Ovary (tissue), 10 donors: ENCODE measurements at regions of chrX and their contacts with region 1.

Region 1: DNA sequence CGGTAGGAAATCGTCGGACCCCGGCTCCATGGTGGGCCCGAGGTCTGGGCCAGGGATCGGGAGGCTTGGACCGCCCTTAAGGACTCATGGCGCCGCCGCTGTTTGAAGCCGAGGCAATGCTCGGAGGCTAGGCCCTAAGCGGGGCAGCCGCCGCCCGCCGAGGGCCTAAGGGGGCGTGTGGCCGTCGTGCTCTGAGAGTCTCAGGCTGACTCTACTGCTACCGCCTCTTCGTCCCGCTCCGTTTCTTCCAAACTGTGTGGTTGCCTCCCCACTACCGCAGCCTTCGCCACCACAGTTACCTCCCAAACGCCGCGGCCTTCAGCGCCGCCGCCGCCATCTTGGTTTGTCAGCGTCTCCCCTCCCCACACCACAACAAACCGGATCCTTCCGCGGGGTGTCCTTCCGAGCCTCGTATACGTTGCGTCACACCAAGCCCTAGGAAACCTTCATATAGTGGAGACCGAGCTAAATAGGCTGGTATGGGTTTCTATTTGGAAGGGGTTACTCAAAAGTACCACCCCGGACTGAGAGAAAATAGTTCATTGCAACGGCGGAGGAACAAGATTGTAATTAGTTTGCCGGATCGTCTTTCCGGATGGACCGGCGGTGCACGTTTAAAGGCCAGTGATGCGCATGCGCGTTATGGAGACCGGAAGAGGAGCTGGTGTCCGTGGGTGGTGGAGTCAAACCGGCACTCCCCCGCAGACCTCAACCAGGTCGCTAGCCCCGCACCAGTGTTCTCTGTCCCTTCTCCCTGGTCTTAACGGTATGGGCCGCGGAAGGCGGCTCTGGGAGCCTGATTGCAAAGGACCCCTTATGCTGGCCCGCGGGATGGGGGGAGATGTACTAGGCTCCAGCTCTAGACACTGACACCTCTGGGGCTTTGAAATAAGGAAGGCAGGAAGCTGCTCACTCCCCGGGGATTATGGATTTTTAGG is at the start of gene KDM5C:
- DNase-seq: peak; percentile 92 to 96 (median 96)
- H3K4me3 ChIP-seq: peak within 1 kb of the TSS; percentile 53
- H3K27ac ChIP-seq: peak within 1 kb of the TSS; percentile 75 to 83
- H3K4me1 ChIP-seq: peaks cover 18% of the 10 kb centered on the region
- H3K27me3 ChIP-seq: no peaks in the 10 kb centered on the region
- CTCF ChIP-seq: peak in 1 of 3 donors; percentile 27
- EP300 ChIP-seq: peak; percentile 42
- POLR2A ChIP-seq: peak; percentile 70
- total RNA-seq, gene KDM5C: 76.7 to 121 (median 98.7) TPM

Region 2: DNA sequence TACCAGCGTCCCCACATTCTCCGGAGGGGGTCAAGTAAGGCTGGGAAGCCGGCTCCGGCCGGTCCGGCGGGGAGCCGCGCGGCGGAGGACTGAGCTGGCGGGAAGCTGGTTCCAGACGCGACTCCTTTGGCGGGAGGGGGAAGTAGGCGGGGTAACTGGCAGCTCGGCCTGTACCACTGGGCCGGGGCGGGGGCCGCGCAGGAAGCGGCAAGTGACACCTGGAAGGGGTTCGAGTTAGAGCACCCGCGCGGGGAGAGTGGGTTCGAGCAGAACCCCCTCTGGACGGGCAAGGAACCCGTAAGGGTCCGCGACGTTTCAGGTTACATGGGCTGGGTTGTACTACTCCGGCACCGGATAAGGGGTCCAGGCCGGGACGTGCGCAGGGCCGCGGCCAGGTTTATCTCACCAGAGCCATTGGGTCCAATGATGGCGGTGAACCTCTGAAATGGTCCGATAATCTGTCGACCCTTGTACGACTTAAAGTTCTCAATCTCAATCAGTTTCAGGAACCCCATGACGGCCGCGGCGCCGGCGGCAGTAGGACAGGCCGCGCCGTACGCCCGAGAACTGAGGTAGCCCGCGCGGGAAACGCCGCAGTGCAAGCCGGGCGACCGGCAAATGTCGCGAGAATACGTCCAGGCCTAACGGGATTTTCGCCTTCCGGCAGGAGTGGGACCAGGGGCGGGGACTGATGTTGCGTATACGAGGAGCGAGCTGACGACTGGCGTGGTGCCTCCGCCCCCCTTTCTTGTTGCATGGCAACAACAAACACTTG is 197.1 kb after region 1 on chrX and contains the start of gene SMC1A:
- intact Hi-C with region 1: loop called in 1 of 4 experiments (anchors 10 kb)
- DNase-seq: peak; percentile 99 to 100 (median 100)
- H3K4me3 ChIP-seq: peak within 1 kb of the TSS; percentile 88
- H3K27ac ChIP-seq: peak within 1 kb of the TSS; percentile 69 to 90
- H3K4me1 ChIP-seq: peaks cover 6% of the 10 kb centered on the region
- H3K27me3 ChIP-seq: no peaks in the 10 kb centered on the region
- CTCF ChIP-seq: peak in 1 of 3 donors; percentile 8
- EP300 ChIP-seq: peak; percentile 6
- POLR2A ChIP-seq: peak; percentile 71
- total RNA-seq, gene SMC1A: 21.8 to 72.4 (median 57.0) TPM